WTC11 (cell line): ENCODE measurements at regions of chr3 and their contacts with region 1.

Region 1: GRCh38 chr3:33131331-33132018 is 17.7 kb downstream of the CRTAP start:
- DNase-seq: peak; percentile 63
- ATAC-seq: peak; percentile 97
- H3K4me3 Mint-ChIP-seq: no peak overlapping the region
- H3K27ac Mint-ChIP-seq: peak overlapping the region; percentile 71; the same call in 1 of the 2 replicates
- H3K4me1 Mint-ChIP-seq: peaks cover 16% of the 10 kb centered on the region
- H3K27me3 Mint-ChIP-seq: no peaks in the 10 kb centered on the region
- CTCF ChIP-seq: peak; percentile 52

Region 2: GRCh38 chr3:33035596-33035995 is 95.9 kb before region 1 on chr3:
- CTCF ChIA-PET with region 1: no interaction called
- POLR2A ChIA-PET with region 1: no interaction called
- DNase-seq: no peak
- ATAC-seq: no peak
- H3K4me3 Mint-ChIP-seq: no peak overlapping the region
- H3K27ac Mint-ChIP-seq: no peak overlapping the region
- H3K4me1 Mint-ChIP-seq: peaks cover 6% of the 10 kb centered on the region
- H3K27me3 Mint-ChIP-seq: no peaks in the 10 kb centered on the region; the same call in 1 of the 2 replicates
- CTCF ChIP-seq: no peak

Region 3: GRCh38 chr3:33060609-33061337 is 70.7 kb before region 1 on chr3:
- CTCF ChIA-PET with region 1: no interaction called
- POLR2A ChIA-PET with region 1: no interaction called
- DNase-seq: no peak
- ATAC-seq: no peak
- H3K4me3 Mint-ChIP-seq: no peak overlapping the region
- H3K27ac Mint-ChIP-seq: no peak overlapping the region
- H3K4me1 Mint-ChIP-seq: no peaks in the 10 kb centered on the region
- H3K27me3 Mint-ChIP-seq: no peaks in the 10 kb centered on the region
- CTCF ChIP-seq: no peak

Region 4: GRCh38 chr3:33113772-33114621 is 17.5 kb before region 1 on chr3 and contains the start of gene CRTAP:
- CTCF ChIA-PET with region 1: interaction called, 10 read pairs
- POLR2A ChIA-PET with region 1: interaction called, 5 read pairs
- DNase-seq: peak; percentile 93
- ATAC-seq: peak; percentile 93
- H3K4me3 Mint-ChIP-seq: peak within 1 kb of the TSS; percentile 81
- H3K27ac Mint-ChIP-seq: peak within 1 kb of the TSS; percentile 63
- H3K4me1 Mint-ChIP-seq: peaks cover 13% of the 10 kb centered on the region
- H3K27me3 Mint-ChIP-seq: peaks cover 18% of the 10 kb centered on the region
- CTCF ChIP-seq: no peak
- total RNA-seq, gene CRTAP: 156 to 197 TPM (median 196 TPM) in 3 replicates

Region 5: GRCh38 chr3:33144433-33144832 is 13.0 kb after region 1 on chr3:
- CTCF ChIA-PET with region 1: interaction called, 39 read pairs
- POLR2A ChIA-PET with region 1: no interaction called
- DNase-seq: peak; percentile 76
- ATAC-seq: peak; percentile 93
- H3K4me3 Mint-ChIP-seq: no peak overlapping the region
- H3K27ac Mint-ChIP-seq: no peak overlapping the region
- H3K4me1 Mint-ChIP-seq: peaks cover 7% of the 10 kb centered on the region; the same call in 1 of the 2 replicates
- H3K27me3 Mint-ChIP-seq: no peaks in the 10 kb centered on the region; the same call in 1 of the 2 replicates
- CTCF ChIP-seq: peak; percentile 86

Region 6: DNA sequence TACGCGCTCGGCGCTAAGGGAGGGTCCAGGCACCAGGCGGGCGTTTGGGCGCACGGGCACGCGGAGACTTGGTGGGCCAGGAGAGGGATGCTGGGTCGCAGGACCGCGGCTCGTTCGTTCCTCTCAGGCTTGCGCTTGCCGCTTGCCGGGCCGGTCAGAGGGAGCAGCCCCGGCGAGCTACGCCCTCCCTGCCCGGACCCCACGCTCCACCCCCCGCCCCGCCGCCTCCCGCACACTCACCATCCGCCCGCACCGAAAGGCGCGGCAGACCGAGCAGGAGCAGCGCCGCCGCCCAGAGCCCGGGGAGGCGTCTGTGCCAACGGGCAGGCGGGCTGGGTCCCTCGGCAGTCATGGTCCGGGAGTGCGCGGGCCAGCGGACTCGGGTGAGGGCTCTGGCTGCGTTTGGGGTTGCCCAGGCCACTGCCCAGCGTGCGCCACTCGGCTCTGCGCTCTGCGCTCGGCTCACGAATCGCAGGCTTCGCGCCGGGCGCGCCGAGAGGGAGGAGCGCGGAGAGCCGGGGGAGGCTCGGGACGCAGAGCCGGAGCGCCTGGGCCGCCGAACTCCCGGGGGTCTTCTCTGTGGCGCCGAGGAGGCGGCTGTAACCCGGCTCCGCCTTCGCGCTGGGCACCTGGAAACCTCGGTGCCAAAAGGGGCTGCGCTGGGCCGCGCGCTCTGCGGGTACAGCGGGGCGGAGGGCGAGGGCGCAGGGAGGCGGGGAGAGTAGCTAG is 87.1 kb after region 1 on chr3 and contains the start of gene SUSD5:
- CTCF ChIA-PET with region 1: interaction called, 10 read pairs
- POLR2A ChIA-PET with region 1: no interaction called
- DNase-seq: peak; percentile 71
- ATAC-seq: peak; percentile 88
- H3K4me3 Mint-ChIP-seq: peak within 1 kb of the TSS; percentile 75
- H3K27ac Mint-ChIP-seq: no peak within 1 kb of the TSS
- H3K4me1 Mint-ChIP-seq: peaks cover 12% of the 10 kb centered on the region
- H3K27me3 Mint-ChIP-seq: peaks cover 81% of the 10 kb centered on the region
- CTCF ChIP-seq: no peak
- total RNA-seq, gene SUSD5: 1.2 to 1.6 TPM (median 1.5 TPM) in 3 replicates

Region 7: DNA sequence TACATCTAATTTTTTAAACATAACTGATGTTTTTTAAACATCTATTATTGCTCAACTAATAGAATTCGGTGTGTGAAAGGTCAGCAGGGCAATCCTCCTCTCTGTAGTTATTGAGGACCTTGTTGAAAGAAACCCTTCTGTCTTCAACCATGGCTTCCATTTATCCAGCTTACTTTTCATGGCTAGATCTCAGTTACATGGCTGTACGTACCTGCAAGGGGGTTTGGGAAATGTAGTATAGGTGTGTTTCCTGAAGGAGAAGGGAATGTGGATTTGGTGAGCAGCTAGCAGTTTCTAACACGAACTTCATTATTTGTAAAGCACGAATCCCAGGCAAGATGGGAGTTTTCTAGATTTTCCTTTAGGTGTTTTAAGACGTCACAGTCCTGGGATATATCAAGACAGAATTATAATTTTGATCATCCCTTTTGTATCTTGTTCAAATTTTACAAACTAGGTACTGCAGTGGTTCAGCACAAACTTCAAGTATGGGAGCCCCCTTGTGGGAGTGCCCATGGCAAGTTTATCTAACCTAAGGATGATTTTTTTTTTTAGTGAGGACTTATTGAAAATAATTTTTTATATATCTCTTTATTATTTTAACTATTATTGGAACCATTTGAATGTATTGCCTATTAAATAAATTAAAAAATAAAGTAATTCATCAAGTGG is 187.4 kb after region 1 on chr3:
- CTCF ChIA-PET with region 1: interaction called, 22 read pairs
- POLR2A ChIA-PET with region 1: no interaction called
- DNase-seq: no peak
- ATAC-seq: peak; percentile 89
- H3K4me3 Mint-ChIP-seq: no peak overlapping the region
- H3K27ac Mint-ChIP-seq: no peak overlapping the region
- H3K4me1 Mint-ChIP-seq: peaks cover 23% of the 10 kb centered on the region
- H3K27me3 Mint-ChIP-seq: no peaks in the 10 kb centered on the region
- CTCF ChIP-seq: no peak